ENCODE measurements at regions of chr4 and their contacts with region 1.

Region 1: GRCh38 chr4:38179690-38180377 is 219.6 kb downstream of the PTTG2 start:
- DNase-seq: peak; percentile 52 to 59
- ATAC-seq: peak; percentile 72 to 78
- H3K4me3 ChIP-seq: no peak overlapping the region
- H3K27ac ChIP-seq: no peak overlapping the region
- H3K4me1 ChIP-seq: peaks cover 3 to 12% of the 10 kb centered on the region in 2 donors
- H3K27me3 ChIP-seq: no peaks in the 10 kb centered on the region
- CTCF ChIP-seq: peak; percentile 79 to 94 (median 88)
- POLR2A ChIP-seq: no peak

Region 2: DNA sequence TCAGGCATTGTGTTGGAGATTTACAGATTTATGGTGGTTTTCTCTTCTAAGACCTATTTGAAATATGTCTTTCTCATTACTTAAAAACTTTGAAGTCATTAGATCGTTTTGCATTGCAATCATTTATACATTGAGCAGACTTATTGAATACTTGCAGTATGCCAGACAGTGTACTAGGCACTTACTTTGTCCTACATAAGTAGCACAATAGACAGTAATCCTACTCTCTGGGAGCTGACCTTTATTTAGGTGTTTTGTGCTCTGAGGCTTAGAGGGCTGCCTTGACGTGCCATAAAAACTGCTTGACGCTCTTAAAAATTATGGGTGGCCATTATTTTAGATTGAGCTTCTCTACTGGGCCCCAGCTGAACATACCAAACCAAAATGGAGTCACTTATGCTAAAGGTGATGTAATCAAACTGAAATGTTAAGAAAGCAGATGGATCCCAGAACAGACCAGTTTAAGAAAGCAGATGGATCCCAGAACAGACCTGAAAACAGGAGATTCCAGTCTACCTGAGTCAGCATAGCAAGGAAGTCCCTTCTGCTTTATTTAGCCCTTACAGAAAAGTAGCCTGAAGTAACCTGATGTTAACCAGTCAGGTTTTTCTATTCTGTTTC is 177.3 kb before region 1 on chr4:
- in situ Hi-C with region 1: no loop called
- intact Hi-C with region 1: no loop called
- DNase-seq: no peak
- ATAC-seq: peak in 1 of 2 donors; percentile 16
- H3K4me3 ChIP-seq: no peak overlapping the region
- H3K27ac ChIP-seq: no peak overlapping the region
- H3K4me1 ChIP-seq: peaks cover 10 to 27% of the 10 kb centered on the region in 2 donors
- H3K27me3 ChIP-seq: no peaks in the 10 kb centered on the region
- CTCF ChIP-seq: no peak
- POLR2A ChIP-seq: no peak

Region 3: GRCh38 chr4:38078590-38079421 is 101.0 kb before region 1 on chr4:
- in situ Hi-C with region 1: loop called in 1 of 4 experiments (anchors 10 kb)
- intact Hi-C with region 1: loop called (anchors 5 kb)
- DNase-seq: no peak
- ATAC-seq: no peak
- H3K4me3 ChIP-seq: no peak overlapping the region
- H3K27ac ChIP-seq: peak overlapping the region in 3 of 4 donors; percentile 25 to 37 (median 28)
- H3K4me1 ChIP-seq: peaks cover 17 to 30% of the 10 kb centered on the region in 2 donors
- H3K27me3 ChIP-seq: no peaks in the 10 kb centered on the region
- CTCF ChIP-seq: no peak
- POLR2A ChIP-seq: no peak

Region 4: DNA sequence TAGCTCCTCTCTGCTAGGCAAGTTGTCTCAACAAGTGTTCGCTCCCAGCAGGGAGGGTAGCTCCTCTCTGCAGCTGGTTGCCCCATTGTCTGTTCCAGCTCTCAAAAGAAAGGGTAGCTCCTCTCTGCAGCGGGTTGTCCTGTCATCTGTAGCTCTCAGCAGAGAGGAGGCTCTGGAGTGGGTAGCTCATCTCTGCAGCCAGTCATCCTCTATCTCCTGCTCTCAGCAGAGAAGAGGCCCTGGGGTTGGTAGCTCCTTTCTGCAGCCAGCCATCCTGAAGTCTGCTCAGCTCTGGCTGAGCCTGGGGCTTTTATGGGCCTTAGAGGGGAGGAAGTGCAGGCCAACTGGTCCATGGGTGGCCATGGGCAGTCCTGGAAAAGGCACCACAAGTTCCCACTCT is 123.1 kb after region 1 on chr4:
- in situ Hi-C with region 1: no loop called
- intact Hi-C with region 1: no loop called
- DNase-seq: no peak
- ATAC-seq: no peak
- H3K4me3 ChIP-seq: no peak overlapping the region
- H3K27ac ChIP-seq: no peak overlapping the region
- H3K4me1 ChIP-seq: no peaks in the 10 kb centered on the region
- H3K27me3 ChIP-seq: no peaks in the 10 kb centered on the region
- CTCF ChIP-seq: no peak
- POLR2A ChIP-seq: no peak

Region 5: GRCh38 chr4:38371391-38371851 is 191.6 kb after region 1 on chr4:
- in situ Hi-C with region 1: no loop called
- intact Hi-C with region 1: no loop called
- DNase-seq: no peak
- ATAC-seq: no peak
- H3K4me3 ChIP-seq: no peak overlapping the region
- H3K27ac ChIP-seq: no peak overlapping the region
- H3K4me1 ChIP-seq: peaks cover 0 to under 1% of the 10 kb centered on the region in 2 donors
- H3K27me3 ChIP-seq: no peaks in the 10 kb centered on the region
- CTCF ChIP-seq: no peak
- POLR2A ChIP-seq: no peak

Region 6: GRCh38 chr4:38675146-38676121 is 495.6 kb after region 1 on chr4:
- in situ Hi-C with region 1: loop called (anchors 5 to 10 kb)
- intact Hi-C with region 1: loop called (anchors 1 kb)
- DNase-seq: peak; percentile 45 to 59
- ATAC-seq: peak; percentile 57 to 61
- H3K4me3 ChIP-seq: no peak overlapping the region
- H3K27ac ChIP-seq: peak overlapping the region; percentile 69 to 98 (median 72)
- H3K4me1 ChIP-seq: peaks cover 78 to 89% of the 10 kb centered on the region in 2 donors
- H3K27me3 ChIP-seq: no peaks in the 10 kb centered on the region
- CTCF ChIP-seq: peak; percentile 87 to 96 (median 91)
- POLR2A ChIP-seq: no peak

Region 7: DNA sequence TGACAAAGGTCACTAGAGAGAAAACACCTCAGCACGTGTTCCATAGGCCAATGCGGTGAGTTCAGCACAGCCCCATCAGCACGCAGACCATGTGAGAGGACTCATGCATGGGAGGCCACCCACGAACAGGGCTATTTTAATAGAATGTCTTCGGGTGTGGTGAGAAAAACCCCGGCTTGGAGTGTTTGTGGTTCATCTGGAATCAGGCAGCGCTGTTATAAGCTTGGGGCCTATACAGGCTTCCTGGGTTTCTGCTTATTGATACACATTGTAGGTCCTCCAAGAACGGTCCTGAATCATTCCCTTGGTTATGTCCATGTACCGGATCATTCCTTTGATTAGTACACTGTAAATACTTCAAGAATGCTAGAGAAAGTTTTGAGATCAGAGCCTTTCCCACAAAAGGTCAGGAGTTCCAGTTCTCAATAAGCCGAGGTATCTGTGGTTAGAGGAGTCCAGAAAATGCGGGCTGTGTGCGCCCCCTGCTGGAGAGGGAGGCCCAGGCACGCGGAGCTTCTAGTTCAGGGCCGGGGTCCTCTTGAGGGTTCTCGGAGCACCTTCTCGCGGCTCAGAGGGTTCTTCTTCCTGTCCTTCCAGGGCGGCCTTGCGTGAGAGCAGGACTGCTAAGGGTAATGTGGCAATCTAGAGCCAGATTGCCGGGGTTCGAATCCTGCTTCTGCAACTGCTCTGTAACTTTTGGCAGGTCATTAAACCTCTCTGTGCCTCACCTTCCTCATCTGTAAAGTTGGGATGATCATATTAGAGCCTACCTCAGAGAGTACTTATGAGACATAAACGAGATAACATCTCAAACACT is 551.2 kb after region 1 on chr4:
- in situ Hi-C with region 1: loop called in 3 of 4 experiments (anchors 5 kb)
- intact Hi-C with region 1: loop called (anchors 1 kb)
- DNase-seq: peak; percentile 37 to 65
- ATAC-seq: peak; percentile 73 to 75
- H3K4me3 ChIP-seq: no peak overlapping the region
- H3K27ac ChIP-seq: no peak overlapping the region
- H3K4me1 ChIP-seq: no peaks in the 10 kb centered on the region
- H3K27me3 ChIP-seq: no peaks in the 10 kb centered on the region
- CTCF ChIP-seq: peak; percentile 82 to 88 (median 85)
- POLR2A ChIP-seq: no peak

Measured in gastrocnemius medialis (tissue), 4 donors.